Gastrocnemius medialis (tissue), 4 donors: ENCODE measurements at regions of chr6 and their contacts with region 1.

Region 1: GRCh38 chr6:52020945-52021570 is 66.4 kb downstream of the PKHD1 start:
- DNase-seq: no peak
- ATAC-seq: no peak
- H3K4me3 ChIP-seq: no peak overlapping the region
- H3K27ac ChIP-seq: no peak overlapping the region
- H3K4me1 ChIP-seq: no peaks in the 10 kb centered on the region
- H3K27me3 ChIP-seq: no peaks in the 10 kb centered on the region
- CTCF ChIP-seq: peak; percentile 48 to 80 (median 77)
- POLR2A ChIP-seq: no peak

Region 2: DNA sequence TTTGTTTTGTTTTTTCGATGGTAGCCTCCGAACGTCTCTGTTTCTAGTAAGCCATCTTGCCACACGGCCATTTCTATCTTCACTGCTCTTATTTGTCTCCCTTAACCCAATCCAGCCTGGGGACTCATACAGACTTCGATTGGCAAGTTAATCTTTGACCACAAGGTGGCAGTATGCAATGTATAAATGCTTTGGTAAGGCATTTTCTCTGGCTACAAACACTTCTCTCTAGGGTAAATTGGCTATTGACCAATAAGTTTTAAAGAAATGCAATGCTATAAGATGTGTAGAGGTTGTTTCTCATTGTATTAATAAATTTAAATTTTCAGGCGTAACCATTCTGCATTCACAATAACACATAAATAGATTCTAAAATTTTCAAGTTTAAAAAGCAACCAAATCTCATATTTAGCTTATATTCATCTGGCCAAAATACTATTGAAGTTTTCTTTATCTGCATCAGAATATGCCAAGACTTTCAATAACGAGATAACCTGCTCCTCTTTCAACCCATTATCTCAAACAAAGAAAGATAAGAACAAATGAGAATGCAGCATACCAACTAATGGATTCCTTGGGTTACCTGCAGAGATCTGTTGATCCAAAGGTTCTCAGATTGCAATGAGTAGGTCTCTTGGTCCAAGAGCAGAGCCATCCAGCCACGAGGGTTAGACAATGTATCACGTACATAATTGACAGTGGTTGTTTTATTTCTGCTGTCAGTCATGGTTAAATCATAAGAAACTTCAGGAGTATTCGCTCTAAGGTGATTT is 165.6 kb before region 1 on chr6:
- in situ Hi-C with region 1: loop called in 2 of 4 experiments (anchors 10 kb)
- intact Hi-C with region 1: loop called (anchors 10 kb)
- DNase-seq: no peak
- ATAC-seq: peak in 1 of 2 donors; percentile 41
- H3K4me3 ChIP-seq: no peak overlapping the region
- H3K27ac ChIP-seq: no peak overlapping the region
- H3K4me1 ChIP-seq: no peaks in the 10 kb centered on the region
- H3K27me3 ChIP-seq: no peaks in the 10 kb centered on the region
- CTCF ChIP-seq: peak; percentile 6 to 60 (median 41)
- POLR2A ChIP-seq: no peak

Region 3: DNA sequence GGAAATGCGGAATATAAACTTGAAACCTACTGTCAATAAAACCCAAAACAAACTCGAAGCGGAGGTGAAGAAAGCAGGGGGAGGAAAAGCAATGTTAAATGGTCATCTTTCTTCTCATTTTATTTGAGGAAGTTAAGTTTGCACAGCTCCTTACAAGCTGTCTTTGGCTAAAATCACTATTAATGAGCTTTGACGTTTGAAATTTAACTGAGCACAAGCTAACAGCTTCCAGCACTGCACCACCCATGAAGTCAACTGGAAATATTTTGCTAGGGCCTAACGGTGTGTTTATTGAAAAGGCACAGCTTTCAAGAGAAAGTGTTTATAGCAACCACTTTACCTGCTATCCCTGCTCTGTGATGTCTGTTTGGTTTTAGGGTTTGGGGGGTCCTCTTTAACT is 37.5 kb before region 1 on chr6:
- in situ Hi-C with region 1: no loop called
- intact Hi-C with region 1: no loop called
- DNase-seq: no peak
- ATAC-seq: no peak
- H3K4me3 ChIP-seq: no peak overlapping the region
- H3K27ac ChIP-seq: no peak overlapping the region
- H3K4me1 ChIP-seq: no peaks in the 10 kb centered on the region
- H3K27me3 ChIP-seq: no peaks in the 10 kb centered on the region
- CTCF ChIP-seq: no peak
- POLR2A ChIP-seq: no peak